Caco-2 (cell line): ENCODE measurements at regions of chr10 and their contacts with region 1.

Region 1: DNA sequence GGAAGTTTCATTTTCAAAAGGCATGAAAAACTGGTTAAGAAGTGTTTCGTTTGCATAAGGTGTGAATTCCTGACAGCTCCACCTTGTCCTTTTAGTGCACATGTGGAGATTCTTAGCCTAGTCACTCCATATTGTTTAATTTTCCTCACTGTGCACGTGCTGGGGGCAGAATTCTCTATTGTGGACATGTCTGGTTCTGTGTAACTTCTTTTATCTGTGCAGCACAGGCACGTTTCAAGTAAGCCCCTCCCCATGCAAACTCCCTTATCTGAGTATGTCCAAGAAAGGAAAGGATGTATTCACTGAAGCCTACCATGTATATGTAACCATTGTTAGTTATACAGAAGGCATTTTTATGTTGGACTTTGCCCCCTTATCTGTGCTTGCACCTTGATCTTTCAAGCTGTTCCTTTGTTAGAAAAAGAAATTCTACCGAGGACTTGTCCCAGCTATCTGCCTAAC is 1346.3 kb downstream of the REEP3 start:
- DNase-seq: peak; percentile 94
- H3K4me3 ChIP-seq: no peak overlapping the region
- H3K4me3 Mint-ChIP-seq: peak overlapping the region; percentile 25
- H3K27ac Mint-ChIP-seq: peak overlapping the region; percentile 79
- H3K4me1 ChIP-seq: peaks cover 35% of the 10 kb centered on the region
- H3K4me1 Mint-ChIP-seq: peaks cover 40% of the 10 kb centered on the region
- H3K27me3 ChIP-seq: no peaks in the 10 kb centered on the region
- H3K27me3 Mint-ChIP-seq: no peaks in the 10 kb centered on the region
- CTCF ChIP-seq: no peak

Region 2: GRCh38 chr10:64329510-64329909 is 538.0 kb before region 1 on chr10:
- CTCF ChIA-PET with region 1: no interaction called
- POLR2A ChIA-PET with region 1: no interaction called
- intact Hi-C with region 1: no loop called
- DNase-seq: no peak
- H3K4me3 ChIP-seq: no peak overlapping the region
- H3K4me3 Mint-ChIP-seq: no peak overlapping the region
- H3K27ac Mint-ChIP-seq: no peak overlapping the region
- H3K4me1 ChIP-seq: no peaks in the 10 kb centered on the region
- H3K4me1 Mint-ChIP-seq: no peaks in the 10 kb centered on the region
- H3K27me3 ChIP-seq: no peaks in the 10 kb centered on the region
- H3K27me3 Mint-ChIP-seq: peaks cover 3% of the 10 kb centered on the region
- CTCF ChIP-seq: no peak

Region 3: DNA sequence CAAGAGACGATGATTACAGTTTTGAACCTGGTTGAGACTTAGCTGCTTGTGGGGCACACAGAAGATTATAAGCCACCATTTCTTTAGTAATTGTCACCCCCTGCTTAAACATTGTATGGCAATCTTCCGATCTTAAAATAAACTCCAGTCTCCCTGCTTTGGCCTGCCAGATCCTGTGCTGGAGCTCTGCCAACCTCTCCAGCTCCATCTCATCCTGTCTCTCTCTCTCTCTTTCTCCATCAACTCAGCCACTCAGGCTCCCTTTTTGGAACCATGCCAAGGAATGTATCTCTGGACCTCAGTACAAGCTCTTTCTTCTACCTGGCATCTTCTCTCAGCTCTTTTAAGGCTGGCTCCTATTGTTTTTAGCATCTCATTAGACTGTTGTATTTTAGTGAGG is 293.2 kb before region 1 on chr10:
- CTCF ChIA-PET with region 1: no interaction called
- POLR2A ChIA-PET with region 1: no interaction called
- intact Hi-C with region 1: loop called (anchors 5 kb)
- DNase-seq: no peak
- H3K4me3 ChIP-seq: no peak overlapping the region
- H3K4me3 Mint-ChIP-seq: no peak overlapping the region
- H3K27ac Mint-ChIP-seq: no peak overlapping the region
- H3K4me1 ChIP-seq: peaks cover 20% of the 10 kb centered on the region
- H3K4me1 Mint-ChIP-seq: peaks cover 11% of the 10 kb centered on the region
- H3K27me3 ChIP-seq: no peaks in the 10 kb centered on the region
- H3K27me3 Mint-ChIP-seq: no peaks in the 10 kb centered on the region
- CTCF ChIP-seq: no peak

Region 4: DNA sequence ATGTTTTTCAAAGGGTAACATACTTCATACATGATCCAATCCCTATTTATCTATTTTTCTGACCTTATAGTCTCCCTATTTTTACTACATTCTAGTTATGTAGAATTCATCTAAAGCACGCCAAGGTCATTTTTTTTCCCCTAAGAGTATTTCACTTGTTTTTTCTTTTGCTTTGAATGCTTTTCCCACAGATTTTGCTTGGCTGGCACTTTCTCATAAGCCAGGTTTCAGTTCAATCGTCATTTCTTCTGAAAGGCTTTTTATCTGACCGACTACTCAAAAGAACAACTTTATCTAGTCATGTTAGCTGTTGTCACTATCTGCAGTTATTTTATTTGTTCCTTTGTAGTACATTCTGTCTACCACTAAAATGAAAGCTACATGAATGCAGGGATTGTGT is 71.7 kb before region 1 on chr10:
- CTCF ChIA-PET with region 1: no interaction called
- POLR2A ChIA-PET with region 1: no interaction called
- intact Hi-C with region 1: loop called (anchors 1 kb)
- DNase-seq: peak in 1 of 2 experiments; percentile 45
- H3K4me3 ChIP-seq: no peak overlapping the region
- H3K4me3 Mint-ChIP-seq: peak overlapping the region; percentile 21
- H3K27ac Mint-ChIP-seq: peak overlapping the region; percentile 7
- H3K4me1 ChIP-seq: peaks cover 17% of the 10 kb centered on the region; the same call in 1 of the 2 replicates
- H3K4me1 Mint-ChIP-seq: peaks cover 17% of the 10 kb centered on the region
- H3K27me3 ChIP-seq: no peaks in the 10 kb centered on the region
- H3K27me3 Mint-ChIP-seq: no peaks in the 10 kb centered on the region
- CTCF ChIP-seq: no peak

Region 5: DNA sequence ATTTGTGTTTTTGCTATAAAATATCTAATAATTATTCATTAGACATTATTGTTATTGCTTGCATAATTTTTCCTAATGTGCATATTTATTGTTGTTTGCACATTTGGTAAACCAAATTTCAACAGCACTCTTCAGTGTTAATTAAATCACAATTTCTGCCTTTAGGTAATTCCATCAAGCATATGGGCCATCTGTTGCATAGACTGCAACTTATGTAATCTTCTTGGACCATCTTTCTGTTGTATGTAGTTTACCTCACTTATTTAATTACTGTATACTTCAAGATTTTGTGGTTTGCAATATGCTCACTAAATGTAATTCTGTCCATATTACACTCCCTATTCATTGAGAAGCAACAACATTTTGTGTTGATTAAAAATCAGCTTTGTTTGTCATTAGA is 13.7 kb after region 1 on chr10:
- CTCF ChIA-PET with region 1: no interaction called
- POLR2A ChIA-PET with region 1: no interaction called
- intact Hi-C with region 1: no loop called
- DNase-seq: no peak
- H3K4me3 ChIP-seq: no peak overlapping the region
- H3K4me3 Mint-ChIP-seq: no peak overlapping the region
- H3K27ac Mint-ChIP-seq: no peak overlapping the region
- H3K4me1 ChIP-seq: no peaks in the 10 kb centered on the region
- H3K4me1 Mint-ChIP-seq: no peaks in the 10 kb centered on the region
- H3K27me3 ChIP-seq: no peaks in the 10 kb centered on the region
- H3K27me3 Mint-ChIP-seq: no peaks in the 10 kb centered on the region
- CTCF ChIP-seq: no peak

Region 6: GRCh38 chr10:64956441-64956840 is 88.9 kb after region 1 on chr10:
- CTCF ChIA-PET with region 1: no interaction called
- POLR2A ChIA-PET with region 1: no interaction called
- intact Hi-C with region 1: loop called (anchors 10 kb)
- DNase-seq: no peak
- H3K4me3 ChIP-seq: no peak overlapping the region
- H3K4me3 Mint-ChIP-seq: no peak overlapping the region
- H3K27ac Mint-ChIP-seq: no peak overlapping the region
- H3K4me1 ChIP-seq: no peaks in the 10 kb centered on the region
- H3K4me1 Mint-ChIP-seq: peaks cover 18% of the 10 kb centered on the region
- H3K27me3 ChIP-seq: no peaks in the 10 kb centered on the region
- H3K27me3 Mint-ChIP-seq: no peaks in the 10 kb centered on the region
- CTCF ChIP-seq: no peak

Region 7: DNA sequence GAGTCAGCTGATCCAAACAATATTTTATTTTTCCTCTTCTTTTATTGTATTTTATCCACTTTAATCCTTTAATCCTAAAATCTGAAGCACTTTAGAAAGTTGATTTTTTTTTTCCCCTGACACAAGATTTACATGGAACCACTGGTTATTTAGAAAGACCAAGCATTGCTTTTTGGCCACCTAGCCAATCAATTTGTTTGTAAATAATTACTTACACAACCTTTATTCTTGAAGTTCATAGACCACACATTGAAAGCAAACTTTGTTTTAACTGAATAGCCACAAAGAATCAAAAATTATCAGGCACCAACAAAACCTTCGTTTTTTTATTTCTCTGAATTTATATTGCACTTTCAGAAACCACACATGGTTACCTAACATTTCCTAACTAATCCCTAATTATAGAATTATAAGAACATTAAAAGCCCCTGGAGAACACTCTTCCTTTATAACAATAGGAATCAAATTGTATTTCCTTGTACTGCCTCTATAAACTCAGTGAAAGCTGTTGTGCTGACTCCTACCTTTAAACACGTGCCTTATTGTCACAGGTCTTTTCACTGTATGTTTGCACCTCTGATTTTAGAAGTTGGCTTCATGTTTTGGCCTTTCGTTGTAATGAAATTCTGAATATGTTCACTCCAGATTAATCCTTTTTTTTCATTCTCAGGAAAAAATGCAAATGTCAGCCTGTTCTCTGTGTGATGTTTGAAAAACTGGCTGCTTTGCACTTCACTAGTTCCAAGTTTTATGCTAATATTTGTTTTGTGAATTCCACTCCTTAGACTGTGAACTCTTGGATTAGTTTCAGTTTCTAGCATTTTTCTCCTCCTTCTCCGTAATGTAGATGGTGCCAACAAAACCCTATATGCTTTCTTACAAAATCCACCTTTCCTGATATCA is 165.6 kb after region 1 on chr10:
- CTCF ChIA-PET with region 1: no interaction called
- POLR2A ChIA-PET with region 1: no interaction called
- intact Hi-C with region 1: loop called (anchors 1 kb)
- DNase-seq: peak in 1 of 2 experiments; percentile 34
- H3K4me3 ChIP-seq: no peak overlapping the region
- H3K4me3 Mint-ChIP-seq: peak overlapping the region; percentile 58
- H3K27ac Mint-ChIP-seq: peak overlapping the region; percentile 74
- H3K4me1 ChIP-seq: peaks cover 15% of the 10 kb centered on the region
- H3K4me1 Mint-ChIP-seq: peaks cover 17% of the 10 kb centered on the region
- H3K27me3 ChIP-seq: no peaks in the 10 kb centered on the region
- H3K27me3 Mint-ChIP-seq: no peaks in the 10 kb centered on the region
- CTCF ChIP-seq: no peak

Region 8: DNA sequence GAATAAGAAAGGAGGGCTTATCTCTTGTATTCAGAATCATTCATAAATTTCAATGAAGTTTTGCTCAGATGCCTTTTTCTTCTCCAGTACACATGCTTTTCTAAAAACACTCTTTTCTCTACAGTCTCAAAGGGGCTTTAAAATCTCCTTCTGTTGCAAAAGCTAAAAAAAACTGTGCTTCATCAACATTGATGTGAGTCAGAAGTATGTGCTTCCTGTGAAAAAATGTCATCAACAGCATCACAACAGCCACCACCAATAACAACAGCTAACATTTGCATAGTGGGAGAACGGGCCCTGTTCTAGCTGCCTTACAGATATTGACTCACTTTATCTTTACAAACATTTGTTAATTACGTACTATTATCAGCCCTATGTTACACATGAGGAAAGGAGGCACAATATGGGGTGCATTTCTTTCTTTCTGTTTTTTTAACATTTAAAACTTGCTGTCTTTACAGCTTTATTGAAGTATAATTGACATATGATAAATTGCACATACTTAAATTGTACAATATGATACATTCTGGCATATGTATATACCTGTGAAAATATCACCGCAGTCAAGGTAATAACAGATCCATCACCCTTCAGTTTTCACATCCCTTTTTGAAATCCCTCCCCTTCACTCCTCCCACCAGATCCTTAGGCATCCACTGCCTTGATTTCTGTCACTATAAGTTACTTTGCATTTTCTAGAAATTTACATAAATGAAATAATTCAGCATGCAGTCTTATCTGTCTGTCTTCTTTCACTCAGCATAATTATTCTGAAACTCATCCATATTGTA is 452.9 kb after region 1 on chr10:
- CTCF ChIA-PET with region 1: no interaction called
- POLR2A ChIA-PET with region 1: no interaction called
- intact Hi-C with region 1: loop called (anchors 10 kb)
- DNase-seq: no peak
- H3K4me3 ChIP-seq: no peak overlapping the region
- H3K4me3 Mint-ChIP-seq: no peak overlapping the region
- H3K27ac Mint-ChIP-seq: peak overlapping the region; percentile 63
- H3K4me1 ChIP-seq: peaks cover 37% of the 10 kb centered on the region
- H3K4me1 Mint-ChIP-seq: peaks cover 26% of the 10 kb centered on the region
- H3K27me3 ChIP-seq: no peaks in the 10 kb centered on the region
- H3K27me3 Mint-ChIP-seq: no peaks in the 10 kb centered on the region
- CTCF ChIP-seq: no peak

Region 9: GRCh38 chr10:65570143-65571010 is 702.8 kb after region 1 on chr10:
- CTCF ChIA-PET with region 1: no interaction called
- POLR2A ChIA-PET with region 1: no interaction called
- intact Hi-C with region 1: loop called (anchors 1 kb)
- DNase-seq: peak; percentile 87 to 90
- H3K4me3 ChIP-seq: peak overlapping the region; percentile 49
- H3K4me3 Mint-ChIP-seq: peak overlapping the region; percentile 95
- H3K27ac Mint-ChIP-seq: peak overlapping the region; percentile 95
- H3K4me1 ChIP-seq: peaks cover 8% of the 10 kb centered on the region; the same call in 1 of the 2 replicates
- H3K4me1 Mint-ChIP-seq: peaks cover 8% of the 10 kb centered on the region
- H3K27me3 ChIP-seq: no peaks in the 10 kb centered on the region
- H3K27me3 Mint-ChIP-seq: peaks cover 3% of the 10 kb centered on the region
- CTCF ChIP-seq: no peak